K562 (cell line): ENCODE measurements at regions of chr2 and their contacts with region 1.

Region 1: GRCh38 chr2:36492216-36492945 is 105.6 kb downstream of the FEZ2 start:
- DNase-seq: no peak
- ATAC-seq: no peak
- H3K4me3 ChIP-seq: no peak overlapping the region
- H3K27ac ChIP-seq: no peak overlapping the region
- H3K4me1 ChIP-seq: no peaks in the 10 kb centered on the region
- H3K27me3 ChIP-seq: no peaks in the 10 kb centered on the region; a peak in 1 of 5 replicates
- CTCF ChIP-seq: no peak
- EP300 ChIP-seq: no peak
- POLR2A ChIP-seq: no peak
- RAD21 ChIP-seq: no peak

Region 2: DNA sequence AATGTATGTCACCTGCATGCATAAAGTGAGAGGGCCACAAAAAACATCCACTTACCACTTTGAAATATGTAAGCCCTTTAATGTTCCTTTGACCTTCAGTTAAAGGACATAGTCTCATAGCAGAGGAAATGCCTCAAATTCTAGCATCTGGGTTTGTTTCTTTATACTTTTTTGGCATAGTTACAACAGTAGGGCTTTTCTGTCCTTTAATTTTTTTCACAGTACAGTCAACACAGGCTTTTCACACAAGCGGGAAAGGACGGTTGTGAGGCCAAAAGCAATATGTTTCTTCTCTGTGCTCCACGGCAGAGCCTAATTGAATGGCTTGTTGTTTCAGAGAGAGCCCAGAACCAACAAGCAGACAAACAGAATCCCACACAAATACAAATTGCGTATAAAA is 79.2 kb before region 1 on chr2:
- CTCF ChIA-PET with region 1: no interaction called
- POLR2A ChIA-PET with region 1: no interaction called
- in situ Hi-C with region 1: no loop called
- intact Hi-C with region 1: no loop called
- DNase-seq: no peak
- ATAC-seq: no peak
- H3K4me3 ChIP-seq: no peak overlapping the region
- H3K27ac ChIP-seq: no peak overlapping the region
- H3K4me1 ChIP-seq: no peaks in the 10 kb centered on the region
- H3K27me3 ChIP-seq: no peaks in the 10 kb centered on the region
- CTCF ChIP-seq: no peak
- EP300 ChIP-seq: no peak
- POLR2A ChIP-seq: no peak
- RAD21 ChIP-seq: no peak

Region 3: DNA sequence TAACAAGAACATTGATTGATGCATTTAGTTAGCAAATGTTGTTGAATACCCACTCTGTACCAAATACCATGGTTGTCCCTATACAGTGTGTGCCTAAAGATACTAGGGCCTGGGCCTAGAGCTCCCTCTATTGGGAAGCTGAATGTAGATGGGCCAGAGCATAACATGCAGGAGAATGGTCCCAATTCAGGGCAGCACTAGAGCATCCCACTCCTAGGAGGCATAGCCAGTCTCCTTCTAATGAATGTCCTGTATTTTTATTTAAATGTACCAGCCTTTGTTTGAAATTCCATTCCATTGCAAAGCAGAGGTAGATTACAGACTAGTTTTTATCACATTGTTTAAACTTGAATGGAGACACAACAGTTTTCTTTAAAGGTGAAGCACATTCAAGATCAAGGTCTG is 15.0 kb after region 1 on chr2:
- CTCF ChIA-PET with region 1: no interaction called
- POLR2A ChIA-PET with region 1: interaction called, 11 read pairs
- in situ Hi-C with region 1: no loop called
- intact Hi-C with region 1: no loop called
- DNase-seq: peak; percentile 13 to 56 (median 33)
- ATAC-seq: peak; percentile 96
- H3K4me3 ChIP-seq: no peak overlapping the region
- H3K27ac ChIP-seq: no peak overlapping the region
- H3K4me1 ChIP-seq: peaks cover 0 to 9% of the 10 kb centered on the region in 2 experiments; a peak in 2 of 5 replicates
- H3K27me3 ChIP-seq: no peaks in the 10 kb centered on the region
- CTCF ChIP-seq: peak; percentile 65 to 76 (median 73)
- EP300 ChIP-seq: no peak
- POLR2A ChIP-seq: no peak
- RAD21 ChIP-seq: peak; percentile 72 to 81